ENCODE measurements at regions of chr19 and their contacts with region 1.

Region 1: DNA sequence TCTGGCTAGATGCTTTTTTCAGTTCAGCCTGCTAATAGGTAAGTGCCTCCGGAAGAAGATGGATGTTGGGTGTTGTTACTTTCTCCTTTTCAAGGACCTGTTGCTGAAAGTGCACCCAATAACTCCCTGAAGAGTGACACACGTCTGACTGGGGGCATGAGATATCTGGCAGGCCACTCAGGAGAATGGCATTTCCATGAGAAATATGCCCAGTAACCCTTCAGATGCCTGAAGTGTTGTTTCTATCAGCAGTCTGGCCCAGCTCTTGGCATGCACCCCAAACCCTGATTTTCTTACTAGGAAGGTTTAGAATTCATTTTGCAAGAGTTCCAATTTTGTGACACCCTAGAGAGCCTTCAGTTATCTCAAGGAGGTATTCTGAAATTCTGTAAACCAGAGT is 71.5 kb downstream of the ARHGAP35 start:
- DNase-seq: no peak
- ATAC-seq: peak; percentile 23 to 59; a peak in 5 of 6 replicates
- H3K4me3 ChIP-seq: no peak overlapping the region
- H3K27ac ChIP-seq: peak overlapping the region in 1 of 2 experiments; percentile 43; a peak in 2 of 6 replicates
- H3K4me1 ChIP-seq: peaks cover 89% of the 10 kb centered on the region
- CTCF ChIP-seq: no peak
- EP300 ChIP-seq: no peak
- POLR2A ChIP-seq: no peak
- RAD21 ChIP-seq: no peak

Region 2: GRCh38 chr19:46944918-46945628 is 12.7 kb after region 1 on chr19:
- CTCF ChIA-PET with region 1: interaction called, 22 read pairs
- POLR2A ChIA-PET with region 1: no interaction called
- DNase-seq: no peak
- ATAC-seq: peak in 1 of 2 experiments; percentile 52; a peak in 3 of 6 replicates
- H3K4me3 ChIP-seq: no peak overlapping the region
- H3K27ac ChIP-seq: peak overlapping the region in 1 of 2 experiments; percentile 1; a peak in 1 of 6 replicates
- H3K4me1 ChIP-seq: peaks cover 40% of the 10 kb centered on the region
- CTCF ChIP-seq: no peak
- EP300 ChIP-seq: no peak
- POLR2A ChIP-seq: no peak
- RAD21 ChIP-seq: no peak